ENCODE measurements at regions of chr9 and their contacts with region 1.

Region 1: GRCh38 chr9:71285191-71285656 is 163.8 kb upstream of the TRPM3 start:
- DNase-seq: peak; percentile 73
- H3K4me3 ChIP-seq: no peak overlapping the region
- H3K27ac ChIP-seq: no peak overlapping the region
- H3K4me1 ChIP-seq: no peaks in the 10 kb centered on the region
- H3K27me3 ChIP-seq: no peaks in the 10 kb centered on the region
- CTCF ChIP-seq: peak; percentile 70 to 73
- POLR2A ChIP-seq: no peak

Region 2: DNA sequence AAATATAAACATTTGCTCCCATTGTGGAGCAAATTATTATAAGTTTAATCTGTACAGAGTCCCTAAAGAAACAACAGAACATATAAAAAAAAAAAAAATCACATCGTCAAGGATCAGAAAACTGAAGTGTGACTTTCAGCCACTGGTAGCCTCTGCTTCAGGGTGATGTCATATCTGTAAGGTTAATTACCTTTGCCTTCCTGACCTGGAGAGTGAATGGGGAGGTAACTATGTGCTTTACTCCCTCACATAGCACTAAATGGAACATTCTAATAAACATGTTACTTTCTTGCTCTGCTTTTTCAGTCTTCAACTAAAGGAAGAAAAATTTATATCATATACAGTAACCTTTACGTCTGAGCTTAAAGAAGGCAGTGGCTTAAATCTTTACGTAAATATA is 93.5 kb before region 1 on chr9:
- CTCF ChIA-PET with region 1: no interaction called
- POLR2A ChIA-PET with region 1: no interaction called
- dilution Hi-C with region 1: no loop called
- intact Hi-C with region 1: no loop called
- DNase-seq: no peak
- H3K4me3 ChIP-seq: no peak overlapping the region
- H3K27ac ChIP-seq: no peak overlapping the region
- H3K4me1 ChIP-seq: no peaks in the 10 kb centered on the region
- H3K27me3 ChIP-seq: peaks cover 0 to 4% of the 10 kb centered on the region in 2 experiments
- CTCF ChIP-seq: no peak
- POLR2A ChIP-seq: no peak

Region 3: GRCh38 chr9:71302776-71303175 is 17.6 kb after region 1 on chr9:
- CTCF ChIA-PET with region 1: interaction called, 16 read pairs
- POLR2A ChIA-PET with region 1: no interaction called
- dilution Hi-C with region 1: no loop called
- intact Hi-C with region 1: no loop called
- DNase-seq: no peak
- H3K4me3 ChIP-seq: no peak overlapping the region
- H3K27ac ChIP-seq: no peak overlapping the region
- H3K4me1 ChIP-seq: no peaks in the 10 kb centered on the region
- H3K27me3 ChIP-seq: no peaks in the 10 kb centered on the region
- CTCF ChIP-seq: no peak
- POLR2A ChIP-seq: no peak

Region 4: DNA sequence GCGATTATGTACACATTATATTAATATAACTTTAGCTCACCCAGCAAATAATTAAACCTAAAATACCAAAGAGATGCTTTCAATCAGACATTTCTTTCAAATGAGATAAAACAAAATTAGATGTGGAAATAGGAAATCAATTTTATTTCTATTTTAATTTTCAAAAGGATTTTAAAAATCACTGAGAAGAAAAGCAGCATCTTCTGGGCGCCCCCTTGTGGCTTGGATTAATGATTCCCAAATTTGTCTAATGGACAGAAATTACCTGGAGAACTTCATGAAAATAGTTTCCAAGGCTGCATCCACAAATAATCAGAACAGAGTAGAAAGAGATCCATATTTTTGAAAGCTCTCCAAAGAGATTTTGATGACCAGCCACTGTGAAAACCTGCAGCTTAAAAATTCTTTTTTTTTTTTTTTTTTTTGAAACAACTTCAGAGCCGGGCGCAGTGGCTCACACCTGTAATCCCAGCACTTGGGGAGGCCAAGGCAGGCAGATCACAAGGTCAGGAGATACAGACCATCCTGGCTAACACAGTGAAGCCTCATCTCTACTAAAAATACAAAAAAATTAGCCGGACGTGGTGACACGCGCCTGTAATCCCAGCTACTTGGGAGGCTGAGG is 534.0 kb after region 1 on chr9:
- CTCF ChIA-PET with region 1: interaction called, 34 read pairs
- POLR2A ChIA-PET with region 1: no interaction called
- dilution Hi-C with region 1: no loop called
- intact Hi-C with region 1: loop called (anchors 1 kb)
- DNase-seq: peak; percentile 35
- H3K4me3 ChIP-seq: no peak overlapping the region
- H3K27ac ChIP-seq: no peak overlapping the region
- H3K4me1 ChIP-seq: peaks cover 4% of the 10 kb centered on the region
- H3K27me3 ChIP-seq: peaks cover 0 to 2% of the 10 kb centered on the region in 2 experiments
- CTCF ChIP-seq: peak; percentile 44 to 49
- POLR2A ChIP-seq: no peak